ENCODE measurements at regions of chr16 and their contacts with region 1.

Region 1: DNA sequence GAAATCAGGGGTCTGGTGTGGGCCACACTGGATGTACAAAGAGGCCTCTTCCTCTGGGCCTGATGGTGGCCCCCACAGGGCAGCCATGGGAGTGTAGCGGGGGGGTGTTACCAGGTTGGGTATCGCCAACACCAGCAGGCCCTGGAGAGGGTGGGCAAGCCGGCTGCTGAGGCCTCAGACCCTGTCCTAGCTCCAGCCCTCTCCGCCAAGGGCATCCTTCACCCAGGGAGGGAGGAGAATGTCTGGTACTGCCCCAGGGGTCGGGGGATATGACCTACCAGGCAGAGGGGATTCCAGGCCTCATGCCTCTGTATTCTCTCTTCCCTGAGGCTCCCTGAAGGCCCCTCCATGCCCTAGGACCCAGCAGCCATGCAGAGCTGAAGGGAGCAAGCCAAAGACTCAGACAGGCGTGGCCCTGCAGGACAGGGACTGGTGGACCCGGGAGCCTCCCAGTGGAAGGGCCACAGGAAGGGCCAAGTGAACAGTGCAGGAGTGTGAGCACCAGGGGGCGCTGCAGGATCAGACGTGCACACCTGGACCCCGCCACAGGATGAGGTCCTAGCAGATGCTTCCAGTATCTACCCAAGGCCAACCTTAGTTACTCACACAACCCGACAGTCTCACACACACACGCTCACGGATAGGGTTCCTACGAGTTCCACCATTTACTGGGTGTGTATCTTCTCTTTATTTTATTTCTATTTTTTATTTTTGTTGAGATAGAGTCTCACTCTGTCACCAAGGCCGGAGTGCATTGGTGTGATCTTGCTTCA is 10.9 kb upstream of the CES4A start:
- DNase-seq: peak; percentile 87 to 91
- ATAC-seq: peak; percentile 98 to 99
- H3K4me3 ChIP-seq: no peak overlapping the region
- H3K27ac ChIP-seq: peak overlapping the region; percentile 16 to 53; a peak in 2 of 6 replicates
- H3K4me1 ChIP-seq: peaks cover 3% of the 10 kb centered on the region; the same call in 1 of the 3 replicates
- CTCF ChIP-seq: peak; percentile 94
- EP300 ChIP-seq: no peak
- POLR2A ChIP-seq: no peak
- RAD21 ChIP-seq: peak; percentile 98

Region 2: DNA sequence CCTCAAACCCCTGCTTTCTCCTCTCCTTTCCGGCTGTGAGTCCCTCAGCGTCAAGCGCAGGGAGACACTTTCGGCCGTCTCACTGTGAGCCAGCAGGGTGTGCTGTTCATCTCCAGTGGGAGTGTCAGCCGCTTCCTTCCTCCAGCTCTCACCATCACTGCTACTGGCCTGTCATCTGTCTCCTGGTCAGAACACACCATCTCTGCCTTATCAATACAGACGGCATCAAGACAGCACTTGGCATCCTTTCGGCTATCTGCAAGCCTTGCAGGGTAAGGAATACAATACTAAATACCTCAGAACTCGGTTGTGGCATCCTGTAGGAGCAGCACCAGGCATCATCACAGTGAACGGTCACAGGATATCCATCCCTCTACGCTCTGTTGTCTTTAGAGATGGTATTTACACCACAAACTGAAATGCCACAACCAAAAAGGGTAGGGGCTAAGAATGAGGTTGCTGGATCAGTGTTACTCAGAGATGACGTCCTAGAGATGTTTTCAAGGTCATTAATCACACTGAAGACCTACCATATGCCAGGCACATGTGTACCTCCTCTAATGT is 260.3 kb before region 1 on chr16:
- CTCF ChIA-PET with region 1: no interaction called
- POLR2A ChIA-PET with region 1: no interaction called
- DNase-seq: peak in 1 of 2 experiments; percentile 51
- ATAC-seq: peak; percentile 82 to 84
- H3K4me3 ChIP-seq: no peak overlapping the region
- H3K27ac ChIP-seq: no peak overlapping the region
- H3K4me1 ChIP-seq: no peaks in the 10 kb centered on the region
- CTCF ChIP-seq: peak; percentile 27; the same call in 2 of the 3 replicates
- EP300 ChIP-seq: no peak
- POLR2A ChIP-seq: no peak
- RAD21 ChIP-seq: 0 out of 5 replicates have a peak, but pooled peaks of 1 of the 2 experiments have one; percentile 20

Region 3: DNA sequence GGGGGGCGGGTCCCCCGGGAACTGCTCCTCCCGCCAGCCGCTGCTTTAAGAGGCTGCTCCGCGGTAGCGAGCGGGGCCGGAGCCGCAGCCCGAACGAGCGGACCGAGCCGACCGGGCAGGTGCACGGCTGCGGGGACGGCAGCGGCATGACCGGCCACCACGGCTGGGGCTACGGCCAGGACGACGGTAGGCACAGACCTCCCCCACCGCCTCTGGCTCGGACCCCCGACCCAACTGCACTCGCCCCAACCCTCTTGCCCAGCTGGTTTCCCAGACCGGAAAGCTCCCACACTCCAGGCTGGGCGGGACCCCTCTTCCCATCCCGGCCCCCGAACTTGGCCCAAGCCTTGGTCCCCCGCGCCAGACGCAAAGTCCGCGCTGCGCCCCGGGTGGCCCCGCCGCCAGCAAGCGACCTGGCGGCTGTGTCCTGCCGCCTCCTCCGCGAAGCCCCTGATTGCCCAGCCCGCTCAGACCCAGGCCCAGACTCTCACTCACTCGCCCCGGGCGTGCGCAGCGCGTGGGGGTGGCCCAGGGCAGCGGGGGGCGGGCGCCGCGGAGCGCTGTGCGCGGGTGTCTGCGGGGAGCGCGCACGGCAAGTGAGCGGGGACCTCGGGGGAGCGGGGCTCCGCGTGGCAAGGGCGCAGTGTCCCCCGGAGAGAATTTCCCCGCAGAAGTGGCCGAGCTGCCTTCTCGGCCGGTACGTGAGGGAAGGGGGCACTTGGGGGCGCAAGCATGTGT is 133.0 kb before region 1 on chr16 and contains the start of gene CA7:
- CTCF ChIA-PET with region 1: no interaction called
- POLR2A ChIA-PET with region 1: no interaction called
- DNase-seq: no peak
- ATAC-seq: peak in 1 of 2 experiments; percentile 20; a peak in 2 of 6 replicates
- H3K4me3 ChIP-seq: peak within 1 kb of the TSS; percentile 37
- H3K27ac ChIP-seq: peak within 1 kb of the TSS in 1 of 2 experiments; percentile 49; a peak in 3 of 6 replicates
- H3K4me1 ChIP-seq: peaks cover 3% of the 10 kb centered on the region; the same call in 1 of the 3 replicates
- CTCF ChIP-seq: no peak
- EP300 ChIP-seq: no peak
- POLR2A ChIP-seq: no peak
- RAD21 ChIP-seq: no peak
- polyA plus RNA-seq, gene CA7: not detected in 2 replicates

Region 4: DNA sequence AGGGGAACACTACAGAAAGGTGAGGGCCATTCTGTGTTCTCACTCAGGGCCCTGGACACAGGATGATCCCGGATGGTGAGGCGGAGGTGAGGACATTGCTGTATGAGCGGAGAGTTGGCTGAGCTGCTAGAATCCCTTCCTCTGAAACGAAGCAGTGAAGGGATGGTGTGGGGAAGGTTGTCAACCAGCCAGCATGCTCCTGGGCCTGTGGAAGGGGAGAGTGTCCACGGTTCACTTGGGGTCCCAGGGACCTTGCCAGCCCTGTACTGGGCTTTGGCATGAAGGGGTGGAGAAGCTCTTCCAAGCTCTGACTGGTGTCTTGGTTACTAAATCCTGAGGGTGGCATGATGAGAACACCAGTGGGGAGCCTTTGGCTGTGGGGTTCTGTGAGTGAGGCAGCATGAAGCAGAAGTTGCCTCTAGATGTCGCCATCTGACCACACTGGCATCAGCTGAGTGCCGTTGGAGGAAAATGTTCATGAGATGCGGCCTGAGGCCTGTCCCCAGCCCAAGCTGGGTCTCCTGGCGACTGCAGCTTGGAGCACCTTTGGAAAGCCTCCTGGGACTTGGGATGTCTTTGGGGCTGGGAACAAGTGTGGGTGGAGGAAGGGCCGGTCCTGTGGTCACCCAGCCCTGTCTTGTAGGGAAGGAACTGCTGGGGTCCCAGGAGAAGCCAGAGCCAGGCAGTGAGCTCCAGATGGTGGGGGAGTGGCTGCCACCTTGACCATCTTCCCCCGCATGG is 82.4 kb before region 1 on chr16:
- CTCF ChIA-PET with region 1: interaction called, 13 read pairs
- POLR2A ChIA-PET with region 1: no interaction called
- DNase-seq: peak; percentile 58 to 78
- ATAC-seq: peak; percentile 89 to 96
- H3K4me3 ChIP-seq: no peak overlapping the region
- H3K27ac ChIP-seq: peak overlapping the region in 1 of 2 experiments; percentile 17; a peak in 3 of 6 replicates
- H3K4me1 ChIP-seq: peaks cover 14% of the 10 kb centered on the region
- CTCF ChIP-seq: peak; percentile 87
- EP300 ChIP-seq: no peak
- POLR2A ChIP-seq: no peak
- RAD21 ChIP-seq: peak; percentile 92 to 98

Region 5: GRCh38 chr16:66934153-66934838 is 43.2 kb before region 1 on chr16 and contains the start of gene CIAO2B:
- CTCF ChIA-PET with region 1: no interaction called
- POLR2A ChIA-PET with region 1: no interaction called
- DNase-seq: peak; percentile 88 to 91
- ATAC-seq: peak; percentile 79 to 91
- H3K4me3 ChIP-seq: peak within 1 kb of the TSS; percentile 81
- H3K27ac ChIP-seq: peak within 1 kb of the TSS; percentile 94 to 99
- H3K4me1 ChIP-seq: peaks cover 28% of the 10 kb centered on the region
- CTCF ChIP-seq: no peak
- EP300 ChIP-seq: no peak
- POLR2A ChIP-seq: peak; percentile 94
- RAD21 ChIP-seq: no peak
- polyA plus RNA-seq, gene CIAO2B: 140 and 168 TPM in 2 replicates

Region 6: DNA sequence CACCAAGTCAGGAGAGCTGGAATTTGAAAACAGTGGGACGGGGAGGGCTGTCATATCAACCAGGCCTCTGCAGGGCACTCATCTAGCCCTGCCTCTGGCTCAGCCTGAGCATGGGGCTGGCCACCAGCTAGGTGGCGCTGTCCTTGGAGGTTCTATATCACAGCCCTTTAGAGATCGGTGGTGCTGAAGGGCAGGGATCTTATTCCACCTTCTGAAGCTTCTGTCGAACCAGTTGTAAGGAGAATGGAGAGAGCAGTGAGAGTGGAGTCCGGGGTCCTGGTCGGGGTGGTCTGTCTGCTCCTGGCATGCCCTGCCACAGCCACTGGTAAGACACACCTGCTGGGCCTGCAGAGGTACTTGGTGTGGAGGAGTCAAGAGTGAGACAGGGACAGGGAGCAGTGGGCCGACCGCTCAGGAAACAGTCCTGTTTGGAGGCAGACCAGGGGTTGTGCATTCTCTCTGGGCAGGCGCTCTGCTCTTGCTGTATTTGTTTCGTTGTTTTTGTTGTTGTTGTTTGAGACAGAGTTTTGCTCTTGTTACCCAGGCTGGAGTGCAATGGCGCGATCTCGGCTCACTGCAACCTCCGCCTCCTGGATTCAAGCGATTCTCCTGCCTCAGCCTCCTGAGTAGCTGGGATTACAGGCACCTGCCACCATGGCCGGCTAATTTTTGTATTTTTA is 16.3 kb before region 1 on chr16 and contains the start of gene CES3:
- CTCF ChIA-PET with region 1: interaction called, 216 read pairs
- POLR2A ChIA-PET with region 1: interaction called, 3 read pairs
- DNase-seq: peak; percentile 80 to 85
- ATAC-seq: peak; percentile 99 to 100
- H3K4me3 ChIP-seq: peak within 1 kb of the TSS; percentile 33
- H3K27ac ChIP-seq: peak within 1 kb of the TSS; percentile 49 to 82; a peak in 4 of 6 replicates
- H3K4me1 ChIP-seq: no peaks in the 10 kb centered on the region
- CTCF ChIP-seq: peak; percentile 85
- EP300 ChIP-seq: no peak
- POLR2A ChIP-seq: no peak
- RAD21 ChIP-seq: peak in 1 of 2 experiments; percentile 18; a peak in 1 of 5 replicates
- polyA plus RNA-seq, gene CES3: 3.8 and 4.1 TPM in 2 replicates

Region 7: DNA sequence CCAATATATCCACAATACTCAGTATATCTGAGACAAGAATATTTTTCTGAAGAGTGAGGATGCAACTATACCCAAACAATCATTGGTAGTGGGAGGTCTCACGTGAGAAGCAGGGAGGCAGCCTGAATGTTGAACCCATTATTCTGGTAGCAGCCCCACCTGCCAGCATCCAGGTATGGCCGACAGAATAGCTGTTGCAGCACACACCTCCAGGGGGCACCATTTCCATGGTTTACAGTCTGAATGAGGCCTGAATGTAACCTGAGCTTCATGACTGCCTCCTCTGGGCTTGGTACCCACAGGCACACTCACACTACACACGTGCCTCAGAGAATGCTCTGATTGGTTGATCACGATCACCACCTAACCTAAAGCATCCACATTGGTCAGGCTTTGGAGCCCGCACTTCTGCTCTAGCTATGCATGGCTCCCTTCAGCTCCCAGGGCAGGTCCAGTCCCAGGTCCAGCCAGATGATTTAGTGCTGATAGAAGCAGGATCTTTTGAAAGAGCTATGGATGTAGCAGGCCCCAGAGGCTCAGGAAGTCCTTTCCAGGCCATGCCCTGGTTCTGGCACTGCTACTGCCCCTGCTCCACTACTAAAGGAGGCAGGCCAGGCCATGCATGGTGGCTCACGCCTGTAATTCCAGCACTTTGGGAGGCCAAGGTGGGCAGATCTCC is 40.4 kb after region 1 on chr16:
- CTCF ChIA-PET with region 1: interaction called, 25 read pairs
- POLR2A ChIA-PET with region 1: no interaction called
- DNase-seq: peak; percentile 93 to 97
- ATAC-seq: peak; percentile 89 to 98
- H3K4me3 ChIP-seq: no peak overlapping the region
- H3K27ac ChIP-seq: peak overlapping the region in 1 of 2 experiments; percentile 49; a peak in 2 of 6 replicates
- H3K4me1 ChIP-seq: peaks cover 3% of the 10 kb centered on the region; the same call in 2 of the 3 replicates
- CTCF ChIP-seq: peak; percentile 84
- EP300 ChIP-seq: no peak
- POLR2A ChIP-seq: no peak
- RAD21 ChIP-seq: peak; percentile 84 to 92

Region 8: DNA sequence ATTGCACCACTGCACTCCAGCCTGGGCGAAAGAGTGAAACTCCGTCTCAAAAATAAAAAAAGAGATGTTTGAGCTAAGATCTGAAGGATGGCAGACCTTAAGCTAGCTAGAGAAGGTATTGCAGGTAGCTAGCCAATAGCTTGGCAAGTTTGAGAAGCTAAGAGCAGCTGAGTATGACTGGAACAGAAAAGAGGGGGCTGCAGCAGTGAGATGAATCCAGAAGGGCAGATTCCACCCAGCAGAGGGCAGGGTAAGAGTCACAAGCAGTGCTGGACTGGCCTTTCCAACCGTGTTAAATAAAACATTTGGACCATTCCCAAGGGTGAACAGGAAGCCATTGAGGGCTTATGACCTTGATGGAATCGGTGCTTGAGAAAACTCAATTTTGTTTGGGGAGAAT is 126.5 kb after region 1 on chr16:
- CTCF ChIA-PET with region 1: interaction called, 87 read pairs
- POLR2A ChIA-PET with region 1: no interaction called
- DNase-seq: peak in 1 of 2 experiments; percentile 54
- ATAC-seq: peak; percentile 75 to 87; a peak in 5 of 6 replicates
- H3K4me3 ChIP-seq: no peak overlapping the region
- H3K27ac ChIP-seq: no peak overlapping the region
- H3K4me1 ChIP-seq: 0 out of 3 replicates have a peak, but pooled peaks cover 2% of the 10 kb centered on the region
- CTCF ChIP-seq: peak; percentile 40
- EP300 ChIP-seq: no peak
- POLR2A ChIP-seq: no peak
- RAD21 ChIP-seq: peak in 1 of 2 experiments; percentile 21; a peak in 1 of 5 replicates

Region 9: DNA sequence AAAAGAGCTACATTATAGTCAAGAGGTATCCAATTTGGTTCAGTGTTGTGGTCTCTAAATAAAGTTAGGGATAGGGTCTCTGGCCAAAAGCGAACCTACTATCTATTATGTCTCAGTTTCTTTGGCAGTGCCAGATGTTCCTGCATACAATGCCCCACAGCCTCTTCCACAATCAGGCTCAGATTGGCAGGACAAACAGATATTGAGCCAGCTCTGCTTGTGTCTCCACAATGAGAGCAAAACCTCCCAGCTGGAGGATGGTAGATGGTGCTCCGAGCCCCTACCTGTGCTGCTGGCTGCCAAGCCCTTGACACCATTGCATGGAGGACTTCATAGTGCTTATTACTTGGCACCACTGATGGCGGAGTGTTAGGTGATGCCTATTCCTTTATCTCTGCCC is 151.9 kb after region 1 on chr16:
- CTCF ChIA-PET with region 1: interaction called, 10 read pairs
- POLR2A ChIA-PET with region 1: no interaction called
- DNase-seq: no peak
- ATAC-seq: no peak; a peak in 1 of 6 replicates
- H3K4me3 ChIP-seq: no peak overlapping the region
- H3K27ac ChIP-seq: no peak overlapping the region
- H3K4me1 ChIP-seq: no peaks in the 10 kb centered on the region
- CTCF ChIP-seq: no peak
- EP300 ChIP-seq: no peak
- POLR2A ChIP-seq: no peak
- RAD21 ChIP-seq: no peak

Region 10: DNA sequence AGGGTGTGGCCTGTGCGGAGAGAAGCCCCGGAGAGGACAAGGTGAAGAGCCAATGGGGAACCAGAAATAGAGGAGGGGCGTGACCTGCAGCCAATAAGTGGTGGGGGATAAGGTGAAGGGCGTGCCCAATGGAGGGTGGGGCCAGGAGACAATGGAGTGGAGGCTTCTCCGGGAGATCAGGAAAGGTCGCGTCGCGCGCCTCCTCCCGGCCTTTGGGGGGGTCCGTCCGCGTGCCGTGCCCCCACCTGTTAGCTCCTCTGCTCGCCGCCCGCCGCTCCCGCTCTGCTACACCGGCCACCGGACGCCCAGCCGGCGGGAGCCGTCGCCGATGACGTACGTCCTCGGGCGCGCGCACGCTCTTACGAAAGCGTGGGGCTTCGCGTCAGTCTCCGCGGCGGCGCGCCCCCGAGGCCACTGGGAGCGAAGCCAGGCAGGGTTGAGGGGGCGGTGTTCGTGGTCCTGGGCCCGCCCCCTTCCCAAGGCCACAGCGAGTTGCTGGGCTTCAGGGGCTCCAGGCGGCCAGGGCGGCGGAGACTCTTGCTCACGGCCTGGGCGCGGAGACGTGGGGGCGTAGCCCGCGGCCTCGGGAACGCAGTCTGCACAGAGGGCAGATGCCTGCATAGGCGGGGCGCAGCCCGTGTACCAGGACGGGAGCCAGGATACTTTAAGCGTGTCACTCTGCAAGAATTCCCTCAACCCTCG is 206.3 kb after region 1 on chr16 and contains the start of gene MATCAP1:
- CTCF ChIA-PET with region 1: interaction called, 93 read pairs
- POLR2A ChIA-PET with region 1: no interaction called
- DNase-seq: peak; percentile 98 to 99
- ATAC-seq: peak; percentile 72 to 87
- H3K4me3 ChIP-seq: peak within 1 kb of the TSS; percentile 66
- H3K27ac ChIP-seq: peak within 1 kb of the TSS; percentile 93 to 97
- H3K4me1 ChIP-seq: peaks cover 34% of the 10 kb centered on the region
- CTCF ChIP-seq: no peak
- EP300 ChIP-seq: no peak
- POLR2A ChIP-seq: peak; percentile 45
- RAD21 ChIP-seq: no peak
- polyA plus RNA-seq, gene MATCAP1: 7.2 and 7.5 TPM in 2 replicates

Measured in A549 (cell line).